Activated CD4-positive, alpha-beta T cell treated with anti-CD3 and anti-CD28 coated beads for 36 hours (primary cell): ENCODE measurements at regions of chr2 and their contacts with region 1.

Region 1: DNA sequence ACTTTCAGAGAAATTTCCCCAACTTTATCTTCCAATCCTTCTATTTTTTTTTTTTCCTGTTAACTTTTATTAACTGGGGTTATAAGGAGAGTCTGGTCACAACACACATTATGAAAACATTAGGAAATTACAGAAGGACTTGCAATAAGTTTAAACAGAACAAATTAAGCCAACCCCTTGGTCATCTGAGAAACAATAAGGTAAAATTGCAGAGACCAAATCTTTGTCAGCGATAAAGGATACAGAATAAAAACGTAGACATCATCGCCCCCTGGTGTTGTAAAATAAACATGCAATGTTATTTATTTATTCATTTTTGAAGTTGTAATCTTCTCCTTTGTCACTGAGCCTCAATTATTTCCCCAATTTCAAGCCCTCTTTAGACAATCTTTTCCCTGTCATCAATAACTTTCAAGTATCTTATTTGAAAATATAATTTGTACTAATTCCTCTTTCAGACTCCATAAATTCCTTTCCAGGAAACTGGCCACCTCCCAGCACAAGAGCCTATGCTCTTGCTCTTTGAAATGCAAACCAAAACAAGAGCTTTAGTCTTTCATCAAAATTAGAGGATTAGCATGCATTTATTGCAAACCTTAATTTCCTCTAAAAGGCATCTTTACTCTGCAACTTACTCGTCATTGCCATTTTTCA is 19.5 kb downstream of the G6PC2 start:
- DNase-seq: no peak
- ATAC-seq: no peak
- H3K4me3 Mint-ChIP-seq: no peak overlapping the region
- H3K27ac Mint-ChIP-seq: no peak overlapping the region
- H3K4me1 Mint-ChIP-seq: peaks cover 6% of the 10 kb centered on the region
- H3K27me3 Mint-ChIP-seq: peaks cover 17% of the 10 kb centered on the region

Region 2: GRCh38 chr2:168346725-168347477 is 573.7 kb before region 1 on chr2:
- CTCF ChIA-PET with region 1: interaction called, 24 read pairs
- POLR2A ChIA-PET with region 1: no interaction called
- intact Hi-C with region 1: loop called (anchors 1 kb)
- DNase-seq: peak; percentile 80
- ATAC-seq: peak; percentile 85
- H3K4me3 Mint-ChIP-seq: peak overlapping the region; percentile 67
- H3K27ac Mint-ChIP-seq: peak overlapping the region; percentile 20
- H3K4me1 Mint-ChIP-seq: peaks cover 5% of the 10 kb centered on the region
- H3K27me3 Mint-ChIP-seq: no peaks in the 10 kb centered on the region

Region 3: GRCh38 chr2:168773719-168774521 is 146.7 kb before region 1 on chr2:
- CTCF ChIA-PET with region 1: interaction called, 3 read pairs
- POLR2A ChIA-PET with region 1: no interaction called
- intact Hi-C with region 1: loop called (anchors 1 kb)
- DNase-seq: peak; percentile 60
- ATAC-seq: no peak
- H3K4me3 Mint-ChIP-seq: no peak overlapping the region
- H3K27ac Mint-ChIP-seq: no peak overlapping the region
- H3K4me1 Mint-ChIP-seq: no peaks in the 10 kb centered on the region
- H3K27me3 Mint-ChIP-seq: no peaks in the 10 kb centered on the region

Region 4: GRCh38 chr2:168890006-168890782 is 30.4 kb before region 1 on chr2 and contains the start of gene SPC25:
- CTCF ChIA-PET with region 1: no interaction called
- POLR2A ChIA-PET with region 1: no interaction called
- intact Hi-C with region 1: loop called in 1 of 2 experiments (anchors 2 kb)
- DNase-seq: peak; percentile 94
- ATAC-seq: peak; percentile 100
- H3K4me3 Mint-ChIP-seq: peak within 1 kb of the TSS; percentile 84
- H3K27ac Mint-ChIP-seq: peak within 1 kb of the TSS; percentile 86
- H3K4me1 Mint-ChIP-seq: peaks cover 14% of the 10 kb centered on the region
- H3K27me3 Mint-ChIP-seq: no peaks in the 10 kb centered on the region
- total RNA-seq, gene SPC25: 33.7 to 38.4 TPM